Spleen (tissue), 13 donors: ENCODE measurements at regions of chrX and their contacts with region 1.

Region 1: DNA sequence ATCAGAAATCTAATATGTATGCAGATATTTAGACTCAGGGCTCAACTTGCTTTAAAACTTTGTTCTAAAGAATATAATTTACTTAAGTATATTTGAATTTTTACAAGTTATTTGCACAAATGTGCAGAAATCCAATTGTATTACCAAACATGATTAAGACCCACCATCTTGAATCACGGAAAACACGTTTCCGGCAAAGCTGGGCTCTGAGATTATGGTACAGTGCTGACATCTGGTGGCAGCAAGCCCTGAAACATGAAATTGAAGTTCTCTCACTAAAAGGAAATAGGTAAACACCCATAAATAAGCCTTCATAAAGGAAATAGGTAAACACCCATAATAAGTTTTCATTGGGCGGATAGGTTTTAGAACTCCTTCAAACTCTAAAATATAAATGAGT is 98.3 kb upstream of the MAOA start:
- DNase-seq: no peak
- H3K4me3 ChIP-seq: peak overlapping the region in 1 of 8 donors; percentile 17
- H3K27ac ChIP-seq: no peak overlapping the region
- H3K4me1 ChIP-seq: no peaks in the 10 kb centered on the region
- H3K27me3 ChIP-seq: peaks cover 0 to 11% (median 0%) of the 10 kb centered on the region in 7 donors
- CTCF ChIP-seq: peak in 10 of 11 experiments; percentile 33 to 63 (median 60)
- POLR2A ChIP-seq: no peak

Region 2: GRCh38 chrX:41796577-41796976 is 1761.2 kb before region 1 on chrX:
- intact Hi-C with region 1: loop called (anchors 5 kb)
- DNase-seq: no peak
- H3K4me3 ChIP-seq: no peak overlapping the region
- H3K27ac ChIP-seq: no peak overlapping the region
- H3K4me1 ChIP-seq: peaks cover 0 to 31% (median 4%) of the 10 kb centered on the region in 6 donors
- H3K27me3 ChIP-seq: peaks cover 0 to 7% (median 0%) of the 10 kb centered on the region in 7 donors
- CTCF ChIP-seq: no peak
- POLR2A ChIP-seq: no peak

Region 3: GRCh38 chrX:43176686-43177085 is 381.1 kb before region 1 on chrX:
- intact Hi-C with region 1: no loop called
- DNase-seq: no peak
- H3K4me3 ChIP-seq: no peak overlapping the region
- H3K27ac ChIP-seq: no peak overlapping the region
- H3K4me1 ChIP-seq: no peaks in the 10 kb centered on the region
- H3K27me3 ChIP-seq: no peaks in the 10 kb centered on the region
- CTCF ChIP-seq: no peak
- POLR2A ChIP-seq: no peak

Region 4: DNA sequence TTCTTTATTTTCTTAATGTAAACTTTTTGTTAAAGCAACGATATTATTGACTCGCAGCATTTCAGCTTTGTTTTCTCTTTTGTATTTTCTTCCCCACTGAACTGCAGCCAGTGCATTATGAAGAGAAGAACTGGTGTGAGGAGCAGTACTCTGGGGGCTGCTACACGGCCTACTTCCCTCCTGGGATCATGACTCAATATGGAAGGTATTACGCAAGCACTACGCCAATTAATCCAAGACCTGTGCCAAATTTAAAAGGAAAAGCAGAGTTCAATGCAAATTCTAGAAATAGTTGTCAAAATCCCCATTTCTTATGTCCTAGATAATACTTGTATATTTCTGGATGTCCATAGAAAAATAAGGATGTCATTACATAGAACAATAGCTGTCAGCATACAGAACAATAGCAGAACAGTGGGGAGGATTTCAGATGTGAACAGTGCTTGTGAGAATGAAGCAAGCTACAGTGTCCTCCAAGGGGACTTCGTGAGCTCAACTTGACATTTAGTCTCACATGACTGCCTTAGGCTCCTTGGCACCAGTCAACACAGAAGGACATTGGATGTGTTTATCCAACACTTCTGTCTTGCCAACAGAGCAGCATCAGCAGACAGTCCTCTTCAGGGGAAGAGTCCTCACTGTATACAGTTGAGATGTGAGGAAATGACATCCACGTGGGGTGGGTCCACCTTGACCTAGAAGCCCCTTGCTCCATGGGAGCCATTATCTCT is 184.2 kb after region 1 on chrX:
- intact Hi-C with region 1: loop called (anchors 5 kb)
- DNase-seq: no peak
- H3K4me3 ChIP-seq: no peak overlapping the region
- H3K27ac ChIP-seq: no peak overlapping the region
- H3K4me1 ChIP-seq: no peaks in the 10 kb centered on the region
- H3K27me3 ChIP-seq: no peaks in the 10 kb centered on the region
- CTCF ChIP-seq: no peak
- POLR2A ChIP-seq: no peak